Natural killer cell (primary cell): ENCODE measurements at regions of chr5 and their contacts with region 1.

Region 1: GRCh38 chr5:51225791-51226735 is 157.2 kb upstream of the ISL1 start:
- DNase-seq: no peak
- ATAC-seq: no peak
- H3K4me3 ChIP-seq: no peak overlapping the region
- H3K4me3 Mint-ChIP-seq: no peak overlapping the region
- H3K27ac ChIP-seq: no peak overlapping the region
- H3K27ac Mint-ChIP-seq: no peak overlapping the region
- H3K4me1 ChIP-seq: no peaks in the 10 kb centered on the region
- H3K4me1 Mint-ChIP-seq: no peaks in the 10 kb centered on the region
- H3K27me3 ChIP-seq: no peaks in the 10 kb centered on the region
- H3K27me3 Mint-ChIP-seq: no peaks in the 10 kb centered on the region
- CTCF ChIP-seq: no peak

Region 2: DNA sequence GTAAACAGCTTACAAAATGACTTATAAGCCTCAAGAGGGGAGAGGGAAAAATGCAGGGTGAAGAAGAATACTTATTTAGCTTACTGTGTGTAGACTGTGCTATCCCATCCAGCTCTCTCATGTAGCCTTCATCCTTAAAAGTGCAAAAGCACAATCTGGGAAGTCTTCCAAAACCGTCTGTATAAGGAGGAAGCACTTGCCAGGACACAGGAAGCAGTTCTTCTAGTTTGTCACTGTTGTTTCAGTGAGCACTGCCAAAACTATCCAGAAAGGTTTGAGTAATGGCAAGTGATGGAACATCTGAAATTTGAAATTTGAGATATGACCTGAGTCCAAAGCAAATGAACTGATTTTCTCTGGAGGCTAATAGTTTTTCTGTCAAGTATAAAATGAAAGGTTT is 16.4 kb after region 1 on chr5:
- intact Hi-C with region 1: loop called (anchors 1 kb)
- DNase-seq: no peak
- ATAC-seq: no peak
- H3K4me3 ChIP-seq: no peak overlapping the region
- H3K4me3 Mint-ChIP-seq: no peak overlapping the region
- H3K27ac ChIP-seq: no peak overlapping the region
- H3K27ac Mint-ChIP-seq: no peak overlapping the region
- H3K4me1 ChIP-seq: no peaks in the 10 kb centered on the region
- H3K4me1 Mint-ChIP-seq: no peaks in the 10 kb centered on the region
- H3K27me3 ChIP-seq: no peaks in the 10 kb centered on the region
- H3K27me3 Mint-ChIP-seq: no peaks in the 10 kb centered on the region
- CTCF ChIP-seq: no peak

Region 3: GRCh38 chr5:51386916-51387883 is 161.1 kb after region 1 on chr5:
- intact Hi-C with region 1: no loop called
- DNase-seq: no peak
- ATAC-seq: no peak
- H3K4me3 ChIP-seq: no peak overlapping the region
- H3K4me3 Mint-ChIP-seq: no peak overlapping the region
- H3K27ac ChIP-seq: no peak overlapping the region
- H3K27ac Mint-ChIP-seq: no peak overlapping the region
- H3K4me1 ChIP-seq: no peaks in the 10 kb centered on the region
- H3K4me1 Mint-ChIP-seq: no peaks in the 10 kb centered on the region
- H3K27me3 ChIP-seq: peaks cover 52% of the 10 kb centered on the region
- H3K27me3 Mint-ChIP-seq: peaks cover 71 to 81% of the 10 kb centered on the region in 2 donors
- CTCF ChIP-seq: no peak